Activated CD8-positive, alpha-beta T cell treated with anti-CD3 and anti-CD28 coated beads for 36 hours (primary cell): ENCODE measurements at regions of chr17 and their contacts with region 1.

Region 1: GRCh38 chr17:39244600-39245570 is 19.1 kb upstream of the STAC2 start:
- DNase-seq: peak; percentile 96
- ATAC-seq: peak; percentile 96
- H3K4me3 Mint-ChIP-seq: no peak overlapping the region
- H3K27ac Mint-ChIP-seq: no peak overlapping the region
- H3K4me1 Mint-ChIP-seq: peaks cover 13% of the 10 kb centered on the region
- H3K27me3 Mint-ChIP-seq: no peaks in the 10 kb centered on the region
- CTCF ChIP-seq: peak; percentile 97

Region 2: DNA sequence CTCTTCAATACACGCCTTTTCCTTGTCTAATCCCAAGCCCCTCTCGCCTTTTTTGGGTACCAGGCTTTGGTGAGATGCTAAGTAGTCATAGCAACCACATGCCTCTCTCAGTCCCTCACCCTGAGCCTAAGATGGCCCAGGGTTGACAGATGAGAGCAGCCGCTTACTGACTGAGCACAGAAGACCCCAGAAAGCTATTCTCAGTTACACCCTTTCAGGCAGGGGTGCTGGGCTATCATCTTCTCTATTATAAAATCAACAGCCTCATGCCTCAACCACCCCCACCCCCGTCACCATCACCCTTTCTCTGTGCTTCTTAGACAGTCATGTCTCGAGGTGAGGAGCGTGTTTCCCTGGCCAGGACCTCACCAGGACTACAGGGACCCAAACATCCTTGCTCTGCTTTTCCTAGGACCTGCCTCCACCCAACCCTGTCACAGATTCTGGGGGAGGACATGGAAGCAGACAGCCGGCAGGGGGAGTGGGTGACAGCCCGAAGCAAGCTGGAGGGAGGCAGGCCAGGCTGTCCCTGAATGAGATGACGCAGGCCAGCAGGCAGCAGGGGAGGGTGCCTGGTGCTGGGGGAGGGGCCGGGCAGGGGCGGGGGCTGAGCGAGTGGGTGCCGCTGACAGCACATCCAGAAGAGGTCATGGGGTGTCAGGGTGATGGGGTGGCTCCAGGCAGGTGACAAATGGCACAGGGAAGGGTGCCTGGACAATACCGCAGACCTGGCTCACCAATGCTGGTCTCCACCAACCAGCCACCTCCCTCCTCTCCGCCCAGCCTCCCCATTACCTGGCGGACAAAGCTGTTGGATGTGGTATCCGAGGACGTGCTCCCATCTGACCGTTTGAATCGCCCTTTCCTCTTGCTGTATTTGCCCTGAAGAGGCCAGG is 50.5 kb before region 1 on chr17:
- CTCF ChIA-PET with region 1: interaction called, 516 read pairs
- POLR2A ChIA-PET with region 1: interaction called, 11 read pairs
- intact Hi-C with region 1: no loop called
- DNase-seq: no peak
- ATAC-seq: no peak
- H3K4me3 Mint-ChIP-seq: no peak overlapping the region
- H3K27ac Mint-ChIP-seq: no peak overlapping the region
- H3K4me1 Mint-ChIP-seq: peaks cover 22% of the 10 kb centered on the region
- H3K27me3 Mint-ChIP-seq: no peaks in the 10 kb centered on the region
- CTCF ChIP-seq: no peak

Region 3: DNA sequence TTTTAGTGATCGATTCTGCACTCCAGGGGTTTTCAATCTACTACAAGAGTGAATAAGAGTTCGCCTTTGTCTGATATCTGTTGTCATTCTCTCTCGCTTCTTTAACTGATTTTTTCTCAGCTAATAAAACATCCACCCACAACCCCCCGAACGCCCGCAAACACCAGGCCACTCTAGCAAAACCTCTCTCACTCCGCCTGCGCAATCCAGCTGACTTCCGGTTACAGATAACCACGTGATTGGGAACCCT is 45.1 kb before region 1 on chr17:
- CTCF ChIA-PET with region 1: interaction called, 516 read pairs
- POLR2A ChIA-PET with region 1: interaction called, 39 read pairs
- intact Hi-C with region 1: no loop called
- DNase-seq: peak; percentile 98
- ATAC-seq: peak; percentile 64
- H3K4me3 Mint-ChIP-seq: peak overlapping the region; percentile 90
- H3K27ac Mint-ChIP-seq: peak overlapping the region; percentile 99
- H3K4me1 Mint-ChIP-seq: peaks cover 53% of the 10 kb centered on the region
- H3K27me3 Mint-ChIP-seq: no peaks in the 10 kb centered on the region
- CTCF ChIP-seq: no peak

Region 4: DNA sequence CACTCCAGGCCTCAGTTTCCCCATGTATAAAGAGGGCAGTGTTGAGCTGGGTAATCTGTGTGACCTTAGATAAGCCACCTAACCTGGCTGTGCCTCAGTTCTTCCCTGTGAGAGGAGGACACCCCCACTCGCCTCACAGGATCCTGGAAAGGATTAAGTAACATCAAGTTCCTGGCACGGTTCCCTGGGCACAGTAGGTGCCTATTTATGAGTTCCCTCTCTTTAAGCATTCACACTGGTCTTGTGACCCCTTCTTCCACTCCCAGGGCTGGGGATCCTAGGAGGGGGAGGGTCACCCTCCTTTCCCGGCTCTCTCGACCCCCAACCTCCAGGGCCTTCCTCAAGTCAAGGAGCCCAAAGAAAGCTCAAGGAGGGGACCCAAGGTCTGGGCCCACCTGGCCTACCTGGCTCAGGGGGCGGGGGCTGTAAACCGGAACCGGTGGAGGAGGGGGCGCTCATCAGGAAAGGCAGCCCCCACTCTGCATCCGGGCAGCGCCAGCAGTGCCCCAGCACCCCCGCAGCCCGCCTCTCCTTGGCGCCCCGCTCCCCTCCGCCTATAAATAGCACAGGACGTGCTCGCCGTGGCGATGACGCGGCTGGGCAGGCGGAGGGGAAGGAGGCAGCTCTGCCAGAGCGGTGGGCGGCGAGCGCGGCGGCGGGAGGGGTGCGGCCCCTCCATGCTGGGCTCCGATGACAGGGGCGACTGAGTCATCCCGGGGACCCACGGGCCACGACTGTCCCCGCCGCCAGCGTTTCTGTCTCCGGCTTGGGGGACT is 35.4 kb before region 1 on chr17:
- CTCF ChIA-PET with region 1: interaction called, 516 read pairs
- POLR2A ChIA-PET with region 1: interaction called, 39 read pairs
- intact Hi-C with region 1: loop called (anchors 2 kb)
- DNase-seq: peak; percentile 92
- ATAC-seq: peak; percentile 86
- H3K4me3 Mint-ChIP-seq: peak overlapping the region; percentile 44
- H3K27ac Mint-ChIP-seq: peak overlapping the region; percentile 77
- H3K4me1 Mint-ChIP-seq: peaks cover 38% of the 10 kb centered on the region
- H3K27me3 Mint-ChIP-seq: no peaks in the 10 kb centered on the region
- CTCF ChIP-seq: no peak

Region 5: GRCh38 chr17:39261286-39261685 is 16.4 kb after region 1 on chr17:
- CTCF ChIA-PET with region 1: interaction called, 14 read pairs
- POLR2A ChIA-PET with region 1: interaction called, 3 read pairs
- intact Hi-C with region 1: no loop called
- DNase-seq: peak; percentile 66
- ATAC-seq: peak; percentile 69
- H3K4me3 Mint-ChIP-seq: no peak overlapping the region
- H3K27ac Mint-ChIP-seq: no peak overlapping the region
- H3K4me1 Mint-ChIP-seq: no peaks in the 10 kb centered on the region
- H3K27me3 Mint-ChIP-seq: no peaks in the 10 kb centered on the region
- CTCF ChIP-seq: peak; percentile 45

Region 6: DNA sequence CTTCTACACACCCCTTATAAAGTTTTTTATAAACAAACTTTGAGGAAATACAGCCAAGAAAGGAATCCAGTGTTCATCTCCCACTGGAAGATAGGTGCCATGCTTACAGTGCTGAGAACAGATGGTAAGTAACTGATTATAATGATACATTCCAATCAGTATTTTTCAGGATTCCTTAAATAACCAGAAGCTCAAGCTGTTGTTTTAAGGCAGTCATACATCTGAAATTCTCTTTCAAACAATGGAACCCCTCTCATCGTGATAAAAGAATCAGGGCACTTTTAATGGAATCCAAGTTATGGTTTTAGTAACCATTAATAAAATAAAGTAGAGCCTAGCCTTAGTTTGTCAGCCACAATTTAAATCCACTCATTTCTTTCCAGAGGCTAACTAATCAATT is 36.9 kb after region 1 on chr17:
- CTCF ChIA-PET with region 1: interaction called, 11 read pairs
- POLR2A ChIA-PET with region 1: no interaction called
- intact Hi-C with region 1: no loop called
- DNase-seq: no peak
- ATAC-seq: no peak
- H3K4me3 Mint-ChIP-seq: no peak overlapping the region
- H3K27ac Mint-ChIP-seq: no peak overlapping the region
- H3K4me1 Mint-ChIP-seq: no peaks in the 10 kb centered on the region
- H3K27me3 Mint-ChIP-seq: no peaks in the 10 kb centered on the region
- CTCF ChIP-seq: no peak